Vagina (tissue), 2 donors: ENCODE measurements at regions of chr9 and their contacts with region 1.

Region 1: DNA sequence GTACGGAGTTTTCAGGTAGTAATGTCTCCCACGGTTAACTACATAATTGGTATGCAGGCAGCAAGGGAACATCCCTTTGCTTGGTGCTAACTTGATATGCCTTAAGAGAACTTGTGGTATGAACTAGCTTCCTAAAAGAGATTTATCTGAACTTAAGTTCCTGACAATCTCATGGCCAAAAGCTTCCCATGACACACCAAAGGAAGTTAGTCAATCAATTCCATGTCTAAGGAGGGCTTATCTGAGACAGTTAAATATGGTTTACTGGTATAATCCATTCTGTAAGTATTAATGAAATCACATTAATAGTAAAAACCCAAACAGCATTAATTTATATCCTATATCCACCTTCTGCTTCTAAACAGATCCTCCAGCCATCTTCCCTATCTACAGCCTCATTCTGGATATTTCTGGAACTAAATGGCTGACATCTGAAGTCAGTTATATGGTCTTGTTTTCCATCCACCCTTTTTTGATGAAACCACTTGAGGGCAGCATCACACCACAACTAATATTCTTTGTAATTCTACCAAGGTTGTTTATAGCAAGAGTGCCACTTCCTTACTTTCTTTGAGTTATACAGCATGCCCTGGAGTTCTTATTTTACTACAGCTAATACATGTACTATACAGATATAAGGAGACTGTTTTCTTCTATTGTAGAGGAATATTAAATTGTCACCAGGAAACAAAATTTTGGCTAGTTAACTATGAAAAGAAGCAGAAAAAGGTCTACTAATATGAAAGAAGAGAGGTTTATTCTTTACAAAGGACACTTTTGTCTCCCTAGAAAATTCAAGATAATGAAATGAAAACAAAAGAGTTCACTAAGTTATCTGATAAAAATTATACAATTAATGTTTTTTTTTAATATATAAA is 34.7 kb downstream of the SHOC1 start:
- DNase-seq: no peak
- H3K4me3 ChIP-seq: no peak overlapping the region
- H3K27ac ChIP-seq: peak overlapping the region; percentile 41
- H3K4me1 ChIP-seq: no peaks in the 10 kb centered on the region
- H3K27me3 ChIP-seq: no peaks in the 10 kb centered on the region
- CTCF ChIP-seq: peak; percentile 42 to 84 (median 47)
- POLR2A ChIP-seq: no peak

Region 2: DNA sequence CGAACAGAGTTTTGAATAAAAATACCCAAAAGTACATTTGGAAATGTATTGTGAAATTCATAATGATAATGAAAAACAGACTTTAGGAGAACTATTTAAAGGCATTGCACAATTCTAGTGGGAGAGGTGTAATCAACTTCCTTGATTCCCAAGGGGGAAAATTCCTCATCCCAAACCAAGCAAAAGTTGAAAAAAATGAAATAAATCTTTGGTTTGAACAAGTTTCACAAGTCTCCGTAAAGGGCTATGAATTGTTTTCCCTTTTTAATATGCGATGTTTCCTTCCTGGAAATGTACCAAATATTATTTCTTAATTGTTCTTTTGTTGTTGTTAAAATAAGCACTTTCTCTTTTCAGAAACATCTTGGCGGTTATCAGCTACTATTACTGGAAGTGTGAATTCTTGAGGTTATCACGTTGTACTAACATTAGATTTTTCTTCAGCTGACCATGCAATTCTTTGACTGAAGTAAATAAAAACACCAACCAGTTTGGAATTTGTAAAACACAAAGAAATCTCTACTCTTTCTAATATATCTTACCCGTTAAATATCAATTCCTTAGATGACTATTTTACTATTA is 1239.8 kb before region 1 on chr9:
- intact Hi-C with region 1: no loop called
- DNase-seq: no peak
- H3K4me3 ChIP-seq: no peak overlapping the region
- H3K27ac ChIP-seq: no peak overlapping the region
- H3K4me1 ChIP-seq: no peaks in the 10 kb centered on the region
- H3K27me3 ChIP-seq: no peaks in the 10 kb centered on the region
- CTCF ChIP-seq: no peak
- POLR2A ChIP-seq: no peak

Region 3: GRCh38 chr9:112074250-112075008 is 314.4 kb after region 1 on chr9:
- intact Hi-C with region 1: loop called (anchors 5 kb)
- DNase-seq: no peak
- H3K4me3 ChIP-seq: no peak overlapping the region
- H3K27ac ChIP-seq: peak overlapping the region; percentile 64
- H3K4me1 ChIP-seq: peaks cover 17% of the 10 kb centered on the region
- H3K27me3 ChIP-seq: no peaks in the 10 kb centered on the region
- CTCF ChIP-seq: peak; percentile 91 to 97 (median 93)
- POLR2A ChIP-seq: no peak